Esophagus squamous epithelium (tissue), 5 donors: ENCODE measurements at regions of chr1 and their contacts with region 1.

Region 1: GRCh38 chr1:157992031-157992832 is 1.2 kb upstream of the KIRREL1 start:
- DNase-seq: no peak
- H3K4me3 ChIP-seq: peak overlapping the region in 2 of 4 donors; percentile 79 to 82
- H3K27ac ChIP-seq: peak overlapping the region in 3 of 4 donors; percentile 91 to 93 (median 92)
- H3K4me1 ChIP-seq: peaks cover 4 to 54% (median 22%) of the 10 kb centered on the region in 3 donors
- H3K27me3 ChIP-seq: peaks cover 0 to 50% (median 0%) of the 10 kb centered on the region in 4 donors
- CTCF ChIP-seq: peak; percentile 70 to 93 (median 86)
- POLR2A ChIP-seq: no peak

Region 2: GRCh38 chr1:157806431-157807149 is 185.6 kb before region 1 on chr1:
- intact Hi-C with region 1: no loop called
- DNase-seq: peak; percentile 8
- H3K4me3 ChIP-seq: no peak overlapping the region
- H3K27ac ChIP-seq: no peak overlapping the region
- H3K4me1 ChIP-seq: no peaks in the 10 kb centered on the region
- H3K27me3 ChIP-seq: no peaks in the 10 kb centered on the region
- CTCF ChIP-seq: no peak
- POLR2A ChIP-seq: no peak

Region 3: GRCh38 chr1:158035976-158036583 is 43.8 kb after region 1 on chr1:
- intact Hi-C with region 1: loop called (anchors 5 kb)
- DNase-seq: no peak
- H3K4me3 ChIP-seq: no peak overlapping the region
- H3K27ac ChIP-seq: peak overlapping the region in 1 of 4 donors; percentile 14
- H3K4me1 ChIP-seq: peaks cover 4 to 43% (median 26%) of the 10 kb centered on the region in 3 donors
- H3K27me3 ChIP-seq: no peaks in the 10 kb centered on the region
- CTCF ChIP-seq: peak; percentile 39 to 78 (median 70)
- POLR2A ChIP-seq: no peak

Region 4: GRCh38 chr1:158087320-158087927 is 95.2 kb after region 1 on chr1:
- intact Hi-C with region 1: loop called (anchors 5 kb)
- DNase-seq: no peak
- H3K4me3 ChIP-seq: no peak overlapping the region
- H3K27ac ChIP-seq: no peak overlapping the region
- H3K4me1 ChIP-seq: no peaks in the 10 kb centered on the region
- H3K27me3 ChIP-seq: no peaks in the 10 kb centered on the region
- CTCF ChIP-seq: peak; percentile 51 to 85 (median 72)
- POLR2A ChIP-seq: no peak